ENCODE measurements at regions of chr9 and their contacts with region 1.

Region 1: GRCh38 chr9:35616681-35617459 is 1.3 kb downstream of the CD72 start:
- DNase-seq: peak; percentile 22 to 92 (median 73)
- ATAC-seq: peak; percentile 74
- H3K4me3 ChIP-seq: peak overlapping the region; percentile 44 to 60
- H3K4me3 Mint-ChIP-seq: peak overlapping the region; percentile 85
- H3K27ac ChIP-seq: peak overlapping the region; percentile 36 to 93
- H3K27ac Mint-ChIP-seq: peak overlapping the region; percentile 92
- H3K4me1 ChIP-seq: peaks cover 34% of the 10 kb centered on the region
- H3K4me1 Mint-ChIP-seq: peaks cover 39% of the 10 kb centered on the region
- H3K27me3 ChIP-seq: no peaks in the 10 kb centered on the region
- H3K27me3 Mint-ChIP-seq: no peaks in the 10 kb centered on the region
- CTCF ChIP-seq: peak; percentile 22

Region 2: DNA sequence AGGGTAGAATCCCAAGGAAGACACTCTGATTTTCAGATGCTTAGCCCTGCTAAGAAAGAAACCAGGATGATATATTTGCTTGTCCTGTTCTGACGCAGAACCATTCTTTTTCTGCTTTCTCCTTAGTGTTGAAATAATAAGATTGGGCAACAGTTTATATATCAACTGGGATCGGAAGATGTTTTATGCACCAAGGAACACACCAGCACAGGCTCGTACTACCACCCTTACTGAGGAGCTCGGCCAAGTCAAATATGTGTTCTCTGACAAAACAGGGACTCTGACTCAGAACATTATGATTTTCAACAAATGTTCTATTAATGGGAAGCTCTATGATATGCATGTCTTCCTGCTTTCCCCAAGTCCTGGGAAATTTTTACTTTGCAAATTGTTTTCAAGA is 146.0 kb before region 1 on chr9:
- CTCF ChIA-PET with region 1: no interaction called
- POLR2A ChIA-PET with region 1: no interaction called
- intact Hi-C with region 1: no loop called
- DNase-seq: no peak
- ATAC-seq: no peak
- H3K4me3 ChIP-seq: no peak overlapping the region
- H3K4me3 Mint-ChIP-seq: no peak overlapping the region
- H3K27ac ChIP-seq: no peak overlapping the region
- H3K27ac Mint-ChIP-seq: no peak overlapping the region
- H3K4me1 ChIP-seq: no peaks in the 10 kb centered on the region
- H3K4me1 Mint-ChIP-seq: no peaks in the 10 kb centered on the region
- H3K27me3 ChIP-seq: peaks cover 0 to 4% of the 10 kb centered on the region in 2 experiments
- H3K27me3 Mint-ChIP-seq: peaks cover 43% of the 10 kb centered on the region
- CTCF ChIP-seq: no peak

Region 3: GRCh38 chr9:35563791-35564197 is 53.1 kb before region 1 on chr9:
- CTCF ChIA-PET with region 1: no interaction called
- POLR2A ChIA-PET with region 1: no interaction called
- intact Hi-C with region 1: no loop called
- DNase-seq: no peak
- ATAC-seq: no peak
- H3K4me3 ChIP-seq: no peak overlapping the region
- H3K4me3 Mint-ChIP-seq: no peak overlapping the region
- H3K27ac ChIP-seq: no peak overlapping the region
- H3K27ac Mint-ChIP-seq: no peak overlapping the region
- H3K4me1 ChIP-seq: no peaks in the 10 kb centered on the region
- H3K4me1 Mint-ChIP-seq: no peaks in the 10 kb centered on the region
- H3K27me3 ChIP-seq: no peaks in the 10 kb centered on the region
- H3K27me3 Mint-ChIP-seq: no peaks in the 10 kb centered on the region
- CTCF ChIP-seq: no peak

Region 4: GRCh38 chr9:35628389-35628991 is 11.6 kb after region 1 on chr9:
- CTCF ChIA-PET with region 1: interaction called, 14 read pairs
- POLR2A ChIA-PET with region 1: interaction called, 4 read pairs
- intact Hi-C with region 1: no loop called
- DNase-seq: no peak
- ATAC-seq: no peak
- H3K4me3 ChIP-seq: no peak overlapping the region
- H3K4me3 Mint-ChIP-seq: no peak overlapping the region
- H3K27ac ChIP-seq: no peak overlapping the region
- H3K27ac Mint-ChIP-seq: no peak overlapping the region
- H3K4me1 ChIP-seq: no peaks in the 10 kb centered on the region
- H3K4me1 Mint-ChIP-seq: no peaks in the 10 kb centered on the region
- H3K27me3 ChIP-seq: no peaks in the 10 kb centered on the region
- H3K27me3 Mint-ChIP-seq: no peaks in the 10 kb centered on the region
- CTCF ChIP-seq: no peak

Region 5: DNA sequence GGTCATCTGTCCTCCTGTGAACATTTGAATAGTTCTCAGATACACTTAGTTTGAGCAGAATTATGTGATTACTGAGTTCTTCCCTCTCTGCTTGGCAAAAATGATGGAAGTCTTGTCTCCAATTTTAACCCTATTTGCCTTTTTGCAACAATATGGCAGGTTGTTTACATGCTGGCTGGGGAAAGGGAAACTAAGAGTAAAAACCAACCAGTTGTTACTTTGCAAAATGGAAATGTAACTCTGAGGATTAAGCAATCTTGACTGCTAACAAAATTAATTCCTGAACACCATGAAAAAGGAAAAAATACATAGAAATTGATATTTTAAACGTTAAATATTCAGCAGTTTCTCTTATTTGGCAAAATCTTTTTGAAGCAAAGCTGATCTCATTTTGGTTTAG is 22.8 kb after region 1 on chr9:
- CTCF ChIA-PET with region 1: interaction called, 13 read pairs
- POLR2A ChIA-PET with region 1: interaction called, 12 read pairs
- intact Hi-C with region 1: loop called in 1 of 2 experiments (anchors 2 kb)
- DNase-seq: no peak
- ATAC-seq: no peak
- H3K4me3 ChIP-seq: no peak overlapping the region
- H3K4me3 Mint-ChIP-seq: no peak overlapping the region
- H3K27ac ChIP-seq: peak overlapping the region in 1 of 2 experiments; percentile 56
- H3K27ac Mint-ChIP-seq: peak overlapping the region; percentile 79
- H3K4me1 ChIP-seq: peaks cover 36% of the 10 kb centered on the region
- H3K4me1 Mint-ChIP-seq: peaks cover 64% of the 10 kb centered on the region
- H3K27me3 ChIP-seq: no peaks in the 10 kb centered on the region
- H3K27me3 Mint-ChIP-seq: no peaks in the 10 kb centered on the region
- CTCF ChIP-seq: no peak

Region 6: GRCh38 chr9:35664531-35665470 is 47.9 kb after region 1 on chr9 and contains the start of gene ARHGEF39:
- CTCF ChIA-PET with region 1: interaction called, 17 read pairs
- POLR2A ChIA-PET with region 1: interaction called, 3 read pairs
- intact Hi-C with region 1: no loop called
- DNase-seq: peak in 8 of 9 experiments; percentile 54 to 83 (median 62)
- ATAC-seq: peak; percentile 69
- H3K4me3 ChIP-seq: peak within 1 kb of the TSS; percentile 60 to 77
- H3K4me3 Mint-ChIP-seq: peak within 1 kb of the TSS; percentile 82
- H3K27ac ChIP-seq: peak within 1 kb of the TSS in 1 of 2 experiments; percentile 71
- H3K27ac Mint-ChIP-seq: peak within 1 kb of the TSS; percentile 82
- H3K4me1 ChIP-seq: peaks cover 43% of the 10 kb centered on the region
- H3K4me1 Mint-ChIP-seq: peaks cover 53% of the 10 kb centered on the region
- H3K27me3 ChIP-seq: no peaks in the 10 kb centered on the region
- H3K27me3 Mint-ChIP-seq: no peaks in the 10 kb centered on the region
- CTCF ChIP-seq: no peak
- total RNA-seq, gene ARHGEF39: 0.25 to 0.35 TPM

Measured in CD8-positive, alpha-beta T cell (primary cell).